Left ventricle myocardium superior (tissue), 1 donor: ENCODE measurements at regions of chr7 and their contacts with region 1.

Region 1: GRCh38 chr7:116354546-116355408 is 144.4 kb downstream of the TES start:
- DNase-seq: peak; percentile 75
- ATAC-seq: peak; percentile 83

Region 2: DNA sequence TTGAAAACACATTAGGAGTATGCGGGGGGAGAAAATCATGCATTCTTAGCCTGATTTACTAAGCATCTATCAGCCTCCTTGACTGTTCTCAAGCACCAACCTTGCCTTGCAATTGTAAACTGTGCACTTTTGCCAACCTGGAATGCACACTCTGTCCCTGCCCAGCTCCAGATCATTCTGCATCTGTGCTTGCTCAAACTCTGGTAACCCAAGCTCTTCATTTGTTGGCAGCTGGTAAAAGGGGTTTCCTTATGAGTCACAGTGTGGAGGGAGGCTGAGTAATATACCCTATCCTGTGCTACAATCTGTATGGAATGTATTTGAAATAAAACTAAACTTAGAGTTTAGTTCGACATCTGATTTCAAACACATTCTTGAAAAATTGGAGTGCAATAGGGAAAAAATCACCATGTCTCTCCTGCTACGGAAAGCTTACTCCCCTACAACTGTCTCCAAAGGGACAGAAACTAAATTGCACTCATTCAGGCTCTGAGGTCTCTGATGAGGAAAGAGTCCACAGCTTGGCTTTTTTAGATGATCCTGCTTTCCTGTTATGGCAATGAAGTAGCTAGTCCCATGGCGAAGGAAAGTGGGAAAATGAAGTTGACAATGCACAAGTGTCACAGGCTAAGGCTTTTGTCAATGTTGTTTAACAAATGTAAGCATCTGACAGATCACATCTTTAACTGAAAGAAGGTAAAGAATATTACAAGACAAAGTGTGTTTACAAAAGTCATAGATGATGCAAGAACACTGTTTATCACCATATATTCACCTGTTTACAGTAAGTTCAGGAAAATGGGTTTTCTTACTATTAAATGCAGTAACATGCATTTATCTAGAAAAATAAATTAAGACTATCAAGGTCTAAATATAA is 82.6 kb before region 1 on chr7:
- intact Hi-C with region 1: loop called (anchors 10 kb)
- DNase-seq: no peak
- ATAC-seq: peak; percentile 95

Region 3: DNA sequence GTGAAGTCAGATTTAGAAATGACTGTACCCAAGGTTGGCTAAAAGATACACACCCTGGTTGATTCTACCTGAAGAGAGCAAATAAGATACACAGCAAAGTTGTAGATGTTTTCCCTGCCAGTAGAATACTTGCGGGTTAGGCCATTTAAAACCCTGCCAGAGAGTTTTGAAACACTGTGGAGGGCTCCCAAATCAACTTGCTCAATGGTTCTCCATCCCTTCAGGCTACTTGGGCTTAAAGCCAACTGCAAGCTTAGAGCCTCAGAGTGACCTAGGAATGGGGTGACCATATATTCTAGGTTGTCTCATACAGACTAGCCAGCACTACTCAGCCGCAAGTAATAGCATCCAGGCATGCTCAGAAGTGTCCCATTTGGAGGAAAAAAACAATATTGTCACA is 180.0 kb after region 1 on chr7:
- intact Hi-C with region 1: loop called (anchors 10 kb)
- DNase-seq: no peak
- ATAC-seq: peak; percentile 36